Activated CD4-positive, alpha-beta T cell treated with anti-CD3 and anti-CD28 coated beads, Interleukin-2, amount 10 ng/mL, durations not matched to agents 24 days and 14 days (primary cell): ENCODE measurements at regions of chr3 and their contacts with region 1.

Region 1: GRCh38 chr3:176939022-176939817 is 258.1 kb downstream of the TBL1XR1 start:
- DNase-seq: peak; percentile 77
- H3K4me3 Mint-ChIP-seq: no peak overlapping the region
- H3K27ac Mint-ChIP-seq: no peak overlapping the region
- H3K4me1 Mint-ChIP-seq: no peaks in the 10 kb centered on the region
- H3K27me3 Mint-ChIP-seq: peaks cover 10% of the 10 kb centered on the region

Region 2: GRCh38 chr3:178385280-178385952 is 1446.2 kb after region 1 on chr3:
- intact Hi-C with region 1: loop called (anchors 5 kb)
- DNase-seq: peak; percentile 65
- H3K4me3 Mint-ChIP-seq: no peak overlapping the region
- H3K27ac Mint-ChIP-seq: no peak overlapping the region
- H3K4me1 Mint-ChIP-seq: no peaks in the 10 kb centered on the region
- H3K27me3 Mint-ChIP-seq: peaks cover 3% of the 10 kb centered on the region